CD4-positive, alpha-beta memory T cell (primary cell): ENCODE measurements at regions of chr17 and their contacts with region 1.

Region 1: GRCh38 chr17:39244600-39245570 is 19.1 kb upstream of the STAC2 start:
- DNase-seq: peak; percentile 74 to 83 (median 78)
- H3K4me3 ChIP-seq: no peak overlapping the region
- H3K4me3 Mint-ChIP-seq: peak overlapping the region in 1 of 8 donors; percentile 57
- H3K27ac ChIP-seq: no peak overlapping the region
- H3K27ac Mint-ChIP-seq: peak overlapping the region in 5 of 7 donors; percentile 6 to 92 (median 44)
- H3K4me1 ChIP-seq: peaks cover 11% of the 10 kb centered on the region
- H3K4me1 Mint-ChIP-seq: peaks cover 5 to 14% (median 9%) of the 10 kb centered on the region in 4 donors
- H3K27me3 ChIP-seq: no peaks in the 10 kb centered on the region
- H3K27me3 Mint-ChIP-seq: peaks cover 2% of the 10 kb centered on the region in 2 donors

Region 2: DNA sequence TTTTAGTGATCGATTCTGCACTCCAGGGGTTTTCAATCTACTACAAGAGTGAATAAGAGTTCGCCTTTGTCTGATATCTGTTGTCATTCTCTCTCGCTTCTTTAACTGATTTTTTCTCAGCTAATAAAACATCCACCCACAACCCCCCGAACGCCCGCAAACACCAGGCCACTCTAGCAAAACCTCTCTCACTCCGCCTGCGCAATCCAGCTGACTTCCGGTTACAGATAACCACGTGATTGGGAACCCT is 45.1 kb before region 1 on chr17:
- CTCF ChIA-PET with region 1: interaction called, 554 read pairs
- POLR2A ChIA-PET with region 1: interaction called, 50 read pairs
- intact Hi-C with region 1: no loop called
- DNase-seq: peak in 4 of 5 donors; percentile 92 to 94 (median 92)
- H3K4me3 ChIP-seq: peak overlapping the region; percentile 77 to 93
- H3K4me3 Mint-ChIP-seq: peak overlapping the region; percentile 86 to 98 (median 96)
- H3K27ac ChIP-seq: peak overlapping the region; percentile 98
- H3K27ac Mint-ChIP-seq: peak overlapping the region; percentile 96 to 100 (median 100)
- H3K4me1 ChIP-seq: peaks cover 58% of the 10 kb centered on the region
- H3K4me1 Mint-ChIP-seq: peaks cover 37 to 73% (median 58%) of the 10 kb centered on the region in 4 donors
- H3K27me3 ChIP-seq: no peaks in the 10 kb centered on the region
- H3K27me3 Mint-ChIP-seq: no peaks in the 10 kb centered on the region

Region 3: GRCh38 chr17:39209317-39210092 is 35.4 kb before region 1 on chr17:
- CTCF ChIA-PET with region 1: interaction called, 554 read pairs
- POLR2A ChIA-PET with region 1: interaction called, 54 read pairs
- intact Hi-C with region 1: loop called (anchors 1 kb)
- DNase-seq: peak; percentile 48 to 83 (median 59)
- H3K4me3 ChIP-seq: no peak overlapping the region
- H3K4me3 Mint-ChIP-seq: peak overlapping the region in 7 of 8 donors; percentile 8 to 75 (median 36)
- H3K27ac ChIP-seq: no peak overlapping the region
- H3K27ac Mint-ChIP-seq: peak overlapping the region in 5 of 7 donors; percentile 31 to 86 (median 55)
- H3K4me1 ChIP-seq: peaks cover 24% of the 10 kb centered on the region
- H3K4me1 Mint-ChIP-seq: peaks cover 3 to 32% (median 16%) of the 10 kb centered on the region in 4 donors
- H3K27me3 ChIP-seq: no peaks in the 10 kb centered on the region
- H3K27me3 Mint-ChIP-seq: peaks cover 2% of the 10 kb centered on the region in 2 donors